ENCODE measurements at regions of chr7 and their contacts with region 1.

Region 1: DNA sequence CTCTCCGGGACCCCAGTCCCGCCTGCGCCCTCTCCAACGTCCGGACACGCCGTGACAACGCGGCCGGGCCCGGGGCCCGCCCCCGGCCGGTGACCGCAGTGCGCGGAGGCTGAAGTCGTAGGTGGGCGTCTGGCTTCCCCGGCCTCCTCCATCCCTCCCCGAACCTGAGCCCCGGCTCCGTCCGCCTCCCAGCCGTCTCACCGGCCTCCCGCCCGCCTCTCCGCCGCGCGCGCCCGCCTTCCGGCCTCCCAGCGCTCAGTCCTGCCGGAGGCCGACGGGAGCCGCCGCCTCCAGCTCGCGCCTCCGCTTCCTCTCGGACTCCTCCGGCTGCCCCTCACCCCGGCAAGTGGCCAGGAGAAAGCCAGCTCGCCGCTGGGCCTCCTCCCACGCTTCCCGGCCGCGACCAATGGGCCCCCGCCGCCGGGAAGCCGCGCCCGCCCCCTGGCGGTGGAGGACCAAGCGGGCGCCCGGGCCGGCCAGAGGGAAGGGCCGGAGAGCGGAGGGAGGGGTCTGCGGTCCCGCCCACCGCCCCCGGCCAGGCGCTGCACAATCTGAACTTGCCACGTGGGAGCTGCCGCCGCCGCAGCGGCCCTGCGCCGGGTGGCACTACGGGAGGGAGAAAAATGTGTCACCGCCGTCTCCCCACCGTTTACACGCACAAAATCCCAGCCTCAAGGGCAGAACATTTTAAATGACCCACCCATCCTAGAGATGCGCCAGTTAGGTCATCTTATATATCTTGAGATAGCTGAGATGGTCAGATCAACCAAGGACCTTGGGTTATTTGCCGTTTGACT is at the start of gene FAM3C:
- DNase-seq: peak; percentile 80 to 98
- H3K4me3 ChIP-seq: peak within 1 kb of the TSS; percentile 94
- H3K27ac ChIP-seq: peak within 1 kb of the TSS; percentile 74
- H3K4me1 ChIP-seq: peaks cover 22% of the 10 kb centered on the region
- H3K27me3 ChIP-seq: no peaks in the 10 kb centered on the region
- CTCF ChIP-seq: peak; percentile 88
- total RNA-seq, gene FAM3C: 117 and 134 TPM in 2 replicates

Region 2: GRCh38 chr7:120583899-120584586 is 812.1 kb before region 1 on chr7:
- CTCF ChIA-PET with region 1: interaction called, 10 read pairs
- POLR2A ChIA-PET with region 1: no interaction called
- intact Hi-C with region 1: no loop called
- DNase-seq: peak; percentile 65 to 69
- H3K4me3 ChIP-seq: no peak overlapping the region
- H3K27ac ChIP-seq: no peak overlapping the region
- H3K4me1 ChIP-seq: peaks cover 12% of the 10 kb centered on the region
- H3K27me3 ChIP-seq: no peaks in the 10 kb centered on the region
- CTCF ChIP-seq: no peak

Region 3: GRCh38 chr7:121351679-121352078 is 44.5 kb before region 1 on chr7:
- CTCF ChIA-PET with region 1: no interaction called
- POLR2A ChIA-PET with region 1: no interaction called
- intact Hi-C with region 1: no loop called
- DNase-seq: no peak
- H3K4me3 ChIP-seq: no peak overlapping the region
- H3K27ac ChIP-seq: no peak overlapping the region
- H3K4me1 ChIP-seq: no peaks in the 10 kb centered on the region
- H3K27me3 ChIP-seq: no peaks in the 10 kb centered on the region
- CTCF ChIP-seq: no peak

Region 4: GRCh38 chr7:121406944-121407343 is 10.8 kb after region 1 on chr7:
- CTCF ChIA-PET with region 1: no interaction called
- POLR2A ChIA-PET with region 1: no interaction called
- intact Hi-C with region 1: no loop called
- DNase-seq: no peak
- H3K4me3 ChIP-seq: no peak overlapping the region
- H3K27ac ChIP-seq: no peak overlapping the region
- H3K4me1 ChIP-seq: no peaks in the 10 kb centered on the region
- H3K27me3 ChIP-seq: no peaks in the 10 kb centered on the region
- CTCF ChIP-seq: no peak

Region 5: GRCh38 chr7:121420979-121421378 is 24.8 kb after region 1 on chr7:
- CTCF ChIA-PET with region 1: no interaction called
- POLR2A ChIA-PET with region 1: interaction called, 3 read pairs
- intact Hi-C with region 1: loop called (anchors 1 kb)
- DNase-seq: peak; percentile 46 to 94
- H3K4me3 ChIP-seq: peak overlapping the region; percentile 25; the same call in 1 of the 2 replicates
- H3K27ac ChIP-seq: peak overlapping the region; percentile 67
- H3K4me1 ChIP-seq: peaks cover 25% of the 10 kb centered on the region
- H3K27me3 ChIP-seq: no peaks in the 10 kb centered on the region
- CTCF ChIP-seq: no peak

Region 6: GRCh38 chr7:121428855-121429489 is 32.8 kb after region 1 on chr7:
- CTCF ChIA-PET with region 1: interaction called, 9 read pairs
- POLR2A ChIA-PET with region 1: interaction called, 24 read pairs
- intact Hi-C with region 1: no loop called
- DNase-seq: peak; percentile 17 to 38
- H3K4me3 ChIP-seq: no peak overlapping the region
- H3K27ac ChIP-seq: no peak overlapping the region
- H3K4me1 ChIP-seq: peaks cover 5% of the 10 kb centered on the region; the same call in 1 of the 2 replicates
- H3K27me3 ChIP-seq: no peaks in the 10 kb centered on the region
- CTCF ChIP-seq: no peak

Region 7: DNA sequence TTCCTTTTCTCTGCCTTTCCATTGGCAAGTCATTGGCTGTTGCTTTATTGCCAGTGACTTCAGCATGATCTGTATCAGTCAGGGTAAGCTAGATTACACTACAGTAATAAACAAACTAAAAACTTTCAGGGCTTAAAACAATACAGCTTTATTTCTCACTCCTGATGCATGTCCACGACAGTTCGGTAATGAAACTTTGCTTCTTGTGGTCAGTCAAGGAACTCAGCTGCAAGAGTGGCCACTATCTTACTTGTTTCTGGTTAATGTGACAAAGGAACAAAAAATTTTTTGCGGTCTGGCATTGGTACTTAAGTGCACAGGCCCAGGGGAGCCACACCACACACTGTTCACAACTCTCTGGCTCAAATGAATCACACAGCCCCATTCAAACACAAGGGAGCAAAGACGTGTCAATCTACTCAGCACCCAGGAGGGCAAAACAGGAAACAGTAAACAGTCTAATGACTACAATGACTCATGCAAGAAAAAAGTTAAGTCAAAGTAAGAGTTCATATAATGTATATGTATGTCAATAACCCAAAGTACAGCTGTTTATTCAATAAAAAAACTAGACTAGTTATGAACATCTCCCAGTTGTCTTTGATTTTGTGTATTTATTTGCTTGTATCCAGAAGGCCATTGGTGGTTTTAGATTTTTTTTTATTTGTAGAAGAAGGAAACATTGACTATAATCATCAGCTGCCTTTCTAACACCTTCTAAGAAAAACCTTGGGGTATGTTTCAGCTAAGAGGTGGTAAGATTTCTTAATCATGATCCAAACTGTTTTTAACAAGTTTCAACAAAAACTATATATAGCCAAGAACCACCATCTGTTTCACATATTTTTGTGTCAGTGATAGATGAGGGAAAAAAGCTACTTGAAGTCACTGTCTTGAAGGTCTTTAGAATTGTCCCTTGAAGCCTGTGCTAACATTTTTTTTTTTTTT is 134.3 kb after region 1 on chr7:
- CTCF ChIA-PET with region 1: interaction called, 7 read pairs
- POLR2A ChIA-PET with region 1: interaction called, 17 read pairs
- intact Hi-C with region 1: loop called (anchors 1 kb)
- DNase-seq: peak; percentile 85 to 99
- H3K4me3 ChIP-seq: peak overlapping the region; percentile 42; the same call in 1 of the 2 replicates
- H3K27ac ChIP-seq: peak overlapping the region; percentile 97
- H3K4me1 ChIP-seq: peaks cover 41% of the 10 kb centered on the region
- H3K27me3 ChIP-seq: no peaks in the 10 kb centered on the region
- CTCF ChIP-seq: no peak; the same call in 1 of the 2 replicates

Measured in PC-9 (cell line).